Heart left ventricle (tissue), 16 donors: ENCODE measurements at regions of chr1 and their contacts with region 1.

Region 1: GRCh38 chr1:1703796-1704195 is 11.2 kb upstream of the SLC35E2B start:
- DNase-seq: peak in 2 of 5 donors; percentile 20 to 33
- ATAC-seq: no peak
- H3K4me3 ChIP-seq: no peak overlapping the region
- H3K27ac ChIP-seq: no peak overlapping the region
- H3K4me1 ChIP-seq: no peaks in the 10 kb centered on the region
- H3K27me3 ChIP-seq: no peaks in the 10 kb centered on the region
- CTCF ChIP-seq: no peak
- POLR2A ChIP-seq: no peak

Region 2: GRCh38 chr1:1748686-1749321 is 45.0 kb after region 1 on chr1:
- intact Hi-C with region 1: loop called in 1 of 10 experiments (anchors 10 kb)
- DNase-seq: peak in 1 of 5 donors; percentile 17
- ATAC-seq: no peak
- H3K4me3 ChIP-seq: no peak overlapping the region
- H3K27ac ChIP-seq: no peak overlapping the region
- H3K4me1 ChIP-seq: no peaks in the 10 kb centered on the region
- H3K27me3 ChIP-seq: no peaks in the 10 kb centered on the region
- CTCF ChIP-seq: no peak
- POLR2A ChIP-seq: no peak